HepG2 (cell line): ENCODE measurements at regions of chr17 and their contacts with region 1.

Region 1: GRCh38 chr17:47970704-47971463 is at the start of gene CDK5RAP3:
- DNase-seq: peak; percentile 99
- ATAC-seq: peak; percentile 97
- H3K4me3 ChIP-seq: peak within 1 kb of the TSS; percentile 66 to 95 (median 92)
- H3K27ac ChIP-seq: peak within 1 kb of the TSS; percentile 63
- H3K4me1 ChIP-seq: peaks cover 51% of the 10 kb centered on the region
- H3K27me3 ChIP-seq: no peaks in the 10 kb centered on the region; a peak in 1 of 5 replicates
- CTCF ChIP-seq: peak; percentile 100
- EP300 ChIP-seq: 0 out of 4 replicates have a peak, but pooled peaks of 1 of the 2 experiments have one; percentile 62
- POLR2A ChIP-seq: peak; percentile 92 to 95
- RAD21 ChIP-seq: peak; percentile 99
- total RNA-seq, gene CDK5RAP3: 86.8 and 128 TPM in 2 replicates

Region 2: DNA sequence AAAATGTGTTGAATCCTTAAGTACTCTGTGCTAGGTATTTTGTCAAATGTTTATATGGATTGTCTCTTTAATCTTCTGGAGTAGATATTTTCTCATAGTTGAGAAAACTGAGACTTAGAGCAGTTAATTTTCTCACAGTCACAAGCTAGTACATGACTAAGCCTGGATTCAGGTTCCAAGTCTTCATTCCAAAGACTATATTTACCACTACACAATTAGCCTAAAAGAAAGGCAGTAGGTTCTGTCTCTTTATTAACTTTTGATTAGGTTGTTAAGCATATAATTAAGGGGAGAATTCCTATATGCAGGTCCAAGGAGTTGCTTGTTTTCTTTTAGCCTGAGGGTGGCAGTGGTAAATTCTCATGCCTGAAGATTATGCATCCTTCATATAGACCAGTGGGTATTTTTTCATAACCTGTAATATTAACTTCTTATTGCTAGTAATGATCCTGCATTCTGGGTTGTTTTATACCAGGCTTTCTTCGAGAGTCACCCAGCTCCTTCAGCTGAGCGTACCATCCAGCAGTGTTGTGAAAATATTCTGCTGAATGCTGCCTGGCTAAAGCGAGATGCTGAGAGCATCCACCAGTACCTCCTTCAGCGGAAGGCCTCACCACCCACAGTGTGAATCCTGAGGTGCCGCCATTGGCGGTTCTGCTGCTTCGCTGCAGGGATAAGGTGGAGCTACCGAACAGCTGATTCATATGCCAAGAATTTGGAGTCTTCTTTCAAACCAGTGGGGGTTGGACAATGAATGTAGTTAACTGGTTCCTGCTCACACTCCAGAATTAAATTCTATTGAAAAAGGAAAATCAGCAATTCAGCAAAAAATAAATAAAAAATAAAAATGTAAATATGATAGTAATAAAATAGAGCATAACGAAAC is 349.3 kb before region 1 on chr17:
- CTCF ChIA-PET with region 1: no interaction called
- POLR2A ChIA-PET with region 1: no interaction called
- in situ Hi-C with region 1: no loop called
- intact Hi-C with region 1: no loop called
- DNase-seq: no peak
- ATAC-seq: no peak
- H3K4me3 ChIP-seq: no peak overlapping the region
- H3K27ac ChIP-seq: no peak overlapping the region
- H3K4me1 ChIP-seq: peaks cover 7% of the 10 kb centered on the region; the same call in 1 of the 2 replicates
- H3K27me3 ChIP-seq: no peaks in the 10 kb centered on the region
- CTCF ChIP-seq: no peak
- EP300 ChIP-seq: no peak
- POLR2A ChIP-seq: no peak
- RAD21 ChIP-seq: no peak

Region 3: DNA sequence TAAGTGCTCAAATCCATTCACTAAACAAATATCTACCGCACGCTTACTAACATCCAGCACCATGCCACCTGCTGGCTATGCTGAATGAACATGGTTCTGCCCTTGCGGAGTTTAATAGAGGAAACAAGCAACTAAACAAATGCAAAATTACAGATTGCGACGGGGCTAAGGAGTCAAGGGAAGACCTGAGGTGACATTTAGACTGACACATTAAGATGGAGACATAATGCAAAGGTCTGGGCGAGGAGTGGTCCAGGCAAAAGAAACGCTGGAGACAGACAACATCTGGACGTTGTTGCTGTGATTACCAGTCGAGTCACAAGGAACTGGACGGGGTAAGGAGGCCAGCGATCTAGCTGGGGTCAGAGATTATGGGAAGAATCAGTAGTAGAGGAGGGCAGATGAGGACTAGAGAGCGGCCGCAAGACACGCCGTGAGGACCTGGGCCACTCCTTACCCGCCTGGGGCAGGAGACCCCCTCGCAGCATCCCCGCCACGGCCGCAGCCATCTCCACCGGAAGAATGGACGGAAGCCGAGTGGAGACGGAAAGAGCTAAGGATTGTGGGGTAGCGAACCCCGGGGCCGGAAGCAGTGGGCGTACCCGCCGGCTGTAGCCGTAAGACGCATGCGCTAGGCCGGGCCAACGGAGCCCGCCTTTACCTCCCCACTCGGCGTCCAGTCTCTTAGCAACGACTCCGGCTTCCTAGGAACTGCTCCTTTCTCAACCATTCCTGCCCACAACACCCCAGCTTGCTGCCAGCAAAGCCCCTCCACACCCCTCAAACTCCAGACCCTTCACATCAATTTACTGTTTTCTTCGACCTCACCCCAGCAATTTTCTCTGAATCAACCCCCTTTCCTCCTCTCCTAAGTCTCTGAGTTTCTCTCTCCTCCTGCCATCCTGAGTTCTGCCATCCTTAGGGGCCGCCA is 139.6 kb before region 1 on chr17 and contains the starts of genes LRRC46 and MRPL10:
- CTCF ChIA-PET with region 1: no interaction called
- POLR2A ChIA-PET with region 1: interaction called, 12 read pairs
- in situ Hi-C with region 1: no loop called
- intact Hi-C with region 1: no loop called
- DNase-seq: peak; percentile 91
- ATAC-seq: peak; percentile 95
- H3K4me3 ChIP-seq: peak within 1 kb of the TSS; percentile 81 to 97 (median 82)
- H3K27ac ChIP-seq: peak within 1 kb of the TSS; percentile 69
- H3K4me1 ChIP-seq: peaks cover 23% of the 10 kb centered on the region
- H3K27me3 ChIP-seq: peaks cover 0 to 5% of the 10 kb centered on the region in 2 experiments; a peak in 1 of 5 replicates
- CTCF ChIP-seq: peak; percentile 59
- EP300 ChIP-seq: peak in 1 of 2 experiments; percentile 24; a peak in 1 of 4 replicates
- POLR2A ChIP-seq: peak; percentile 96 to 98
- RAD21 ChIP-seq: peak; percentile 25; the same call in 1 of the 2 replicates
- total RNA-seq, gene LRRC46: 0.09 and 0.13 TPM in 2 replicates
- total RNA-seq, gene MRPL10: 56.7 and 59.7 TPM in 2 replicates

Region 4: GRCh38 chr17:47949136-47949759 is 21.6 kb before region 1 on chr17:
- CTCF ChIA-PET with region 1: interaction called, 54 read pairs
- POLR2A ChIA-PET with region 1: interaction called, 267 read pairs
- in situ Hi-C with region 1: no loop called
- intact Hi-C with region 1: loop called (anchors 1 kb)
- DNase-seq: peak; percentile 80
- ATAC-seq: peak; percentile 78
- H3K4me3 ChIP-seq: peak overlapping the region; percentile 18 to 43 (median 28); a peak in 5 of 6 replicates
- H3K27ac ChIP-seq: peak overlapping the region; percentile 76
- H3K4me1 ChIP-seq: peaks cover 91% of the 10 kb centered on the region
- H3K27me3 ChIP-seq: no peaks in the 10 kb centered on the region
- CTCF ChIP-seq: peak; percentile 98
- EP300 ChIP-seq: peak in 1 of 2 experiments; percentile 37; a peak in 1 of 4 replicates
- POLR2A ChIP-seq: no peak; a peak in 1 of 4 replicates
- RAD21 ChIP-seq: peak; percentile 97

Region 5: DNA sequence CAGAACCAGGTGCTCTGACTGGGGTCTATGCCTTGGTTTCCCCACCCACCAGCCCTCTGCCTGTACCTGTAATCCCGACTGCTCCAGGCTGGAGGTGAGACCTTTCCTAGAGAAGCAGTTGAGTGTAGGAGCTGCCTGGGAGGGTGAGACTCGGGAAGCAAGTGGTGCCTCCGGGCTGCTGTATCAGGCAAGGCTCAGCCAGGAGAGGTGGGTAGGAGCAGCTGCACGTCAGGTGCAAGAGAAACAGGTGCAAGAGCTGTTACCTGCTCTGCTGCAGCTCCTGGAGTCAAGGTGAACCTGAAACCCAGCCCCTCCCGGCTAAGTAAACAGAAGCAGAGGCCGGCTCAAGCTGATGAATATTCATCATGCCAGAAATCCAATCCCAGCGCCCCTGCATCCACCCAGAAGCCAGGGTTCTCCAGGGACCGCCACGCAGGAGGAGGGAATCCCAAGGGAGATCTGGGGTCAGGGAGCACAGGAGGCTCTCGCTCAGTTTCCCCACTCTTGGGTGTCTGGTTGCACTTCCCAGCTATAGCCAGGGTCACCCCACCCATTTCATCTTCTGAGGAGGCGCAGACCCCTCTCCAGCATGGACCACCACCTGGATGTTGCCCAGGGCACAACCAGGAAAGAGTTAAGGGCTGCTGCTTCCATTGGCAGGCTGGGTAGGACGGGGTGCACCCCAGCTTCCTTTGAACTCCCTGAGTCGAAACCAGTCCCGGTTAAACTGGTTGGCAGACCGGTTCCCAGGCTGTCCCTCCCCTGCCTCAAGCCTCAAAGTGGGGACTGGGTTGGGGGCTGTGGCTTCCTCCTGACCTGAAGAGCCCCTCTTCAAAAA is 13.1 kb before region 1 on chr17 and contains the start of gene PRR15L:
- CTCF ChIA-PET with region 1: no interaction called
- POLR2A ChIA-PET with region 1: interaction called, 267 read pairs
- in situ Hi-C with region 1: no loop called
- intact Hi-C with region 1: loop called (anchors 2 kb)
- DNase-seq: no peak
- ATAC-seq: peak; percentile 53
- H3K4me3 ChIP-seq: peak within 1 kb of the TSS; percentile 33 to 61 (median 38)
- H3K27ac ChIP-seq: no peak within 1 kb of the TSS
- H3K4me1 ChIP-seq: peaks cover 64% of the 10 kb centered on the region
- H3K27me3 ChIP-seq: peaks cover 0 to 2% of the 10 kb centered on the region in 2 experiments; a peak in 4 of 5 replicates
- CTCF ChIP-seq: no peak
- EP300 ChIP-seq: no peak
- POLR2A ChIP-seq: no peak
- RAD21 ChIP-seq: no peak
- total RNA-seq, gene PRR15L: 2.0 and 2.4 TPM in 2 replicates